Psoas muscle (tissue), 8 donors: ENCODE measurements at regions of chr2 and their contacts with region 1.

Region 1: GRCh38 chr2:61707969-61708852 is 145.6 kb downstream of the FAM161A start:
- DNase-seq: no peak
- ATAC-seq: peak; percentile 88 to 90 (median 90)
- H3K4me3 ChIP-seq: no peak overlapping the region
- H3K27ac ChIP-seq: peak overlapping the region; percentile 95
- H3K4me1 ChIP-seq: peaks cover 25% of the 10 kb centered on the region
- H3K27me3 ChIP-seq: no peaks in the 10 kb centered on the region
- CTCF ChIP-seq: no peak

Region 2: DNA sequence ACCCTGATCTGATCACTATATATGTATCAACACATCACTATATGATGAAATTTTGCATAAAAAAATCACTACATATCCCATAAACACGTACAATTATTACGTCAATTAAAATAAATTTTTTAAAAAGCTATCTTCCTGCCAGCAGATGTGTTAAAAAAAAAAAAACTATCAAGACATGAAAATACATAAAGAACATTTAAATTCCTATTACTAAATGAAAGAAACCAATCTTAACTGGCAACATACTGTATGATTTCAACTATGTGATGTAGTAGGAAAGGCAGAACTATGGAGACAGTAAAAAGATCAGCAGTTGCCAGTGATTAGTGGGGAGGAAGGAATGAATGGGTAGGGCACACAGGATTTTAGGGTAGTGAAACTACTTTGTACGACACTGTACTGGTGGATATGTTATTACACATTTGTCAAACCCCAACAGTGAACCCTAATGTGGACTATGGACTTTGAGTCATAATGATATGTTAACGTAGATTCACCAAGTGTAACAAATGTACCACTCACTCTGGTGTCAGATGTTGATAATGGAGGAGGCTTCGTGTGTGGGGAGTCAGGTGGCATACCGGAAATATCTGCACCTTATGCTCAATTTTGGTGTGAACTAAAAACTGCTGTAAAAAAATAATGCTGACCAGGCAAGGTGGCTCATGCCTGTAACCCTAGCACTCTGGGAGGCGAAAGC is 264.7 kb before region 1 on chr2:
- intact Hi-C with region 1: no loop called
- DNase-seq: no peak
- ATAC-seq: no peak
- H3K4me3 ChIP-seq: no peak overlapping the region
- H3K27ac ChIP-seq: no peak overlapping the region
- H3K4me1 ChIP-seq: peaks cover 62% of the 10 kb centered on the region
- H3K27me3 ChIP-seq: no peaks in the 10 kb centered on the region
- CTCF ChIP-seq: no peak

Region 3: DNA sequence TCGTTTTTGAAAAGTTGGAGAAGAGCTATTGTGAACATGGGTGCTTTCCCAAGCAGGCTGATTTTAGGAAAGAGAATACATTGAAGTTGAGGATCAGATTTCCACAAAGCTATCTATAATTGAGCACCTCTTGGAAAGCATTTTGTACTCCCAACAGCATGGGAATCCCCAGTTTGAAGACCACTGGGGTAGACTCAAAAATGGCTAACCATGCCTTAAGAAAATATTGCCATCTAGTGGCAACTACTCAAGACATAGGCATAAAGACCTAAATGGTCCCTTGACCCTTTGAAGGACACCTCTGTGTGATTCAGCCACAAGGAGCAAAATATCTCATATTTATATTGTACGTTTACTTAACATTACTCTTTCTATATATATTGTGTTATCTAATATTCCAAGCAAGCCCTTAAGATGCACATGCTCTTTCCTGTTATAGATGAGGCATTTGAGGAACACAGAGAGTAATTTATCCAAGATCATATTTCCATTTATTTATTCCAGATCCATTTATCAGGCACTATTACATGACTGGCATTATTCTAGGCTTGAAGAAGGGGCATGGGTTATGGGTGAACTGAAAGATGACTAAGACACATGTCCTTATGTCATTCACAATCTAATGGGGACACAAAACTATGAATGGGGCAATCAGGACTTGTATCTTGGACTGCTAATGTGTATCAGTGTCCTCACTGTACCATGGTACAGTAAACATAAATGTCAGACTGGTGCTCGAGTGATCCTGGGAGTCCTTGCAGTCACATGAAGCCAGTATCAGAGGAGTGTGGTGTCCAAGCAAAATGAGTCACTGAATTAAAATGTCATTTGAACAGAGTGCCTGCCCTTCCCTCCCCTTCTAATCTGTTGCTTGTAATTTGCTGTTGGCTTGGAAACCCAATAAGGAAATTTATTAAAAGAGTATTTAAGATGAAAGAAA is 49.1 kb before region 1 on chr2:
- intact Hi-C with region 1: loop called (anchors 5 kb)
- DNase-seq: no peak
- ATAC-seq: peak; percentile 88 to 95 (median 91)
- H3K4me3 ChIP-seq: no peak overlapping the region
- H3K27ac ChIP-seq: peak overlapping the region; percentile 91
- H3K4me1 ChIP-seq: peaks cover 25% of the 10 kb centered on the region
- H3K27me3 ChIP-seq: no peaks in the 10 kb centered on the region
- CTCF ChIP-seq: peak; percentile 46